Activated CD4-positive, alpha-beta T cell treated with anti-CD3 and anti-CD28 coated beads for 36 hours (primary cell): ENCODE measurements at regions of chr1 and their contacts with region 1.

Region 1: GRCh38 chr1:244835276-244836134 is at the start of gene COX20:
- DNase-seq: peak; percentile 92
- ATAC-seq: peak; percentile 60
- H3K4me3 Mint-ChIP-seq: peak within 1 kb of the TSS; percentile 80
- H3K27ac Mint-ChIP-seq: peak within 1 kb of the TSS; percentile 99
- H3K4me1 Mint-ChIP-seq: peaks cover 43% of the 10 kb centered on the region
- H3K27me3 Mint-ChIP-seq: no peaks in the 10 kb centered on the region
- total RNA-seq, gene COX20: 32.0 to 33.2 TPM

Region 2: GRCh38 chr1:244047621-244048471 is 787.7 kb before region 1 on chr1:
- CTCF ChIA-PET with region 1: no interaction called
- POLR2A ChIA-PET with region 1: no interaction called
- intact Hi-C with region 1: loop called in 1 of 2 experiments (anchors 10 kb)
- DNase-seq: peak; percentile 98
- ATAC-seq: peak; percentile 92
- H3K4me3 Mint-ChIP-seq: peak overlapping the region; percentile 93
- H3K27ac Mint-ChIP-seq: peak overlapping the region; percentile 97
- H3K4me1 Mint-ChIP-seq: peaks cover 35% of the 10 kb centered on the region
- H3K27me3 Mint-ChIP-seq: no peaks in the 10 kb centered on the region

Region 3: DNA sequence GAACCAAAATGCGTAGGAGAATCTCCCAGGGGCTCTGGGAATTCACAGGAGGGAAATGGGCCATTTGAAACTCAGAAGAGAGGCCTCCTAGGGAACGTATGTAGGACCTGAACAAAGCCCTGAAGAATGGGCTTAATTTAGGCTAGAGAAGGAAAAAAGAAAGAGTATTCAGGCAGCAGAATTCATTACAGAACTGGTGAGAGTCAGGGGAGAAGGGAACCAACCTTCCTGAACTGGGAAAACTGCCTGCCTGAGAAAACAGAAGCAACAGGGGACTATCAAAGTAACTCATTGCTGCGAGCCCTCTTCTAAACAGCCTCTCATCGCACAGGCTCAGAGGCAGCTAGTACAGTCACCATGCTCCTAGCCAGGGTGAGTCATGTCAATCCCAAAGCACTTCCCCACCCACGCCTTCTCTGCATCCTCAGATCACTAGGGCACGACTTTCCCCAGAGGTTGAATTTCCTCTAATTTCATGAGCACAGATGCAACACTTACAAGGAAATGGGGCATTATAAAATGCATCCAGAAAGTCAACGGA is 481.9 kb before region 1 on chr1:
- CTCF ChIA-PET with region 1: no interaction called
- POLR2A ChIA-PET with region 1: no interaction called
- intact Hi-C with region 1: no loop called
- DNase-seq: peak; percentile 55
- ATAC-seq: peak; percentile 63
- H3K4me3 Mint-ChIP-seq: no peak overlapping the region
- H3K27ac Mint-ChIP-seq: peak overlapping the region; percentile 37
- H3K4me1 Mint-ChIP-seq: peaks cover 28% of the 10 kb centered on the region
- H3K27me3 Mint-ChIP-seq: no peaks in the 10 kb centered on the region

Region 4: DNA sequence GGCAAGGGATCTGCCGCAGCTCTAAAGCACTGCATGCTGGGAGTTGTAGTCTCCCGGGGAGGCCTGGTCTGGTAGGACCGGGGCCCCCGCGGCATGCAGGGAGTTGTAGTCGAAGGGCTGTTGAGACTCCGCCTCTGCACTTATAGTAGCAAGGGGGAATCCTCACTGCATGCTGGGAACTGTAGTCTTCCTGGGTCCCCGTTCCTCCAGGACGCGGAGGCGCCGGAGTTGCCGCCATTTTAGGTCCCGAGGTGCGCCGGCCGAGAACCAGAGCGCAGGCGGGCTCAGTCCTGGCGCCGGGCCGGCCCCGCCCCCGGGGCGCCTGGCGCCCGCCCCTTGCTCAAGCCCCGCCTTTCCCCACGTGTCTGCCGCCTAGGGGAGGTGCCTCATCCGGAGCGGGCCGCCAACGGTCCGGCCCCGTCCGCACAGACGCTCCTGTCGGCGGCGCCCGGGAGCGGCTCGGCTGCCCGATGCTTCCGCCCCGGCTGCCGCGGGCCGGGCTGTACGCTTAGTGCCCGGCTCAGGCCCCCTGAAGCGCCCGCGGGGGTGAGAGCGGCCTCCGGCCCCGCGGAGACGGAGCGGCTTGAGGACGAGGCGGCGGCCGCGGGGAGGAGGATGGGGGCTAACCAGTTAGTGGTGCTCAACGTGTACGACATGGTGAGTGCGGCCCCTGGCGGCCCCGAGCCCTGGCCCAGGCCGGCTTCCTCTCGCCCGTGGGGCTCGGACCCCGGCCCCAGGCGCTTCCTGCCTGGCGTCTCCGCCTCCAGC is 182.6 kb before region 1 on chr1 and contains the start of gene DESI2:
- CTCF ChIA-PET with region 1: no interaction called
- POLR2A ChIA-PET with region 1: interaction called, 3 read pairs
- intact Hi-C with region 1: loop called (anchors 1 kb)
- DNase-seq: peak; percentile 98
- ATAC-seq: peak; percentile 96
- H3K4me3 Mint-ChIP-seq: peak within 1 kb of the TSS; percentile 76
- H3K27ac Mint-ChIP-seq: peak within 1 kb of the TSS; percentile 95
- H3K4me1 Mint-ChIP-seq: peaks cover 19% of the 10 kb centered on the region
- H3K27me3 Mint-ChIP-seq: no peaks in the 10 kb centered on the region
- total RNA-seq, gene DESI2: 24.5 to 26.0 TPM

Region 5: DNA sequence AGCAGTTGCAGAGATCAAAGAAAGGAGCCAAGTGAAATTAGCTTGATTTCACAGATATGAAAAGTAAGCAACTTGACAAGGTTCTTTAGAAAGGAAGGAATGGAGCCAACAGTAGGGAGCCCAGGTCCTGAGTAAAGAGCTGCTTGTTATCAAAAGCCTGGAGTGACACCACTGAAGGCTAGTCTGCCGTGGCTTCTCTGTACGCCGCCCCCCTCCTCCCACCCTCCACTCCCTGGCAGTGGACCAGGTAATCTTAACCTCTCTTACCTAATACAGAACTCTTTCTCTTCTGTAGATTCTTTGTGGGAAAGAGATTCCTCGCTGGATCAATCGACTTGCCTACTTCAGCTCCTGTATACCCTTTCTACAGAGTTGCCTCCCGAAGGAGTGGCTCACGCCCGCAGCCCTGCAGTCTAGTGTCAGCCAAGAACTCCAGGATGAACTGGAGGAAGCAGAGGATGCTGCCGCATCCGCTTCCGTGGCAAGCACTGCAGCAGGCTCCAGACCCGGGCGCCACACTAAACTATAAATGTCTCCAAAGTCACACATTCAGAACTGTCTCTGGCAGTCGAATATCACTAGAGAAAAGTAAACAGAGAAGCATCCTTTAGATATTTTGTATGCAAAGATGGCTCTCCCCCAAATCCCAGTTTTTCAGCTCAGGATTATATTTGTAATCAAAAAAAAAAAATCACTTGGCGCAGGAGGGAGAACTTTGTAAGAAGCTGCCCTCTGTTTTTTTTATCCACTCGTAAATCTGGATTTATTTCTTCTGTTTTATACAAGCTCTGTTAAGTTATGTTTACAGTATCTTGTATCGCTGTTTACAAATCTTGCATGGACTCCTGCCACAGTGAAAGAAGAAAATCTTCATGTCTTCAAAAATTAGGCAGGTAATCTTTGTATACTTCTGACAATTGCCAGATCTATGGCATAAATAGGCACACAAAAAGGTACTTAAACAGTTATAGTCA is 130.0 kb before region 1 on chr1:
- CTCF ChIA-PET with region 1: no interaction called
- POLR2A ChIA-PET with region 1: no interaction called
- intact Hi-C with region 1: no loop called
- DNase-seq: no peak
- ATAC-seq: no peak
- H3K4me3 Mint-ChIP-seq: no peak overlapping the region
- H3K27ac Mint-ChIP-seq: no peak overlapping the region
- H3K4me1 Mint-ChIP-seq: no peaks in the 10 kb centered on the region
- H3K27me3 Mint-ChIP-seq: no peaks in the 10 kb centered on the region

Region 6: DNA sequence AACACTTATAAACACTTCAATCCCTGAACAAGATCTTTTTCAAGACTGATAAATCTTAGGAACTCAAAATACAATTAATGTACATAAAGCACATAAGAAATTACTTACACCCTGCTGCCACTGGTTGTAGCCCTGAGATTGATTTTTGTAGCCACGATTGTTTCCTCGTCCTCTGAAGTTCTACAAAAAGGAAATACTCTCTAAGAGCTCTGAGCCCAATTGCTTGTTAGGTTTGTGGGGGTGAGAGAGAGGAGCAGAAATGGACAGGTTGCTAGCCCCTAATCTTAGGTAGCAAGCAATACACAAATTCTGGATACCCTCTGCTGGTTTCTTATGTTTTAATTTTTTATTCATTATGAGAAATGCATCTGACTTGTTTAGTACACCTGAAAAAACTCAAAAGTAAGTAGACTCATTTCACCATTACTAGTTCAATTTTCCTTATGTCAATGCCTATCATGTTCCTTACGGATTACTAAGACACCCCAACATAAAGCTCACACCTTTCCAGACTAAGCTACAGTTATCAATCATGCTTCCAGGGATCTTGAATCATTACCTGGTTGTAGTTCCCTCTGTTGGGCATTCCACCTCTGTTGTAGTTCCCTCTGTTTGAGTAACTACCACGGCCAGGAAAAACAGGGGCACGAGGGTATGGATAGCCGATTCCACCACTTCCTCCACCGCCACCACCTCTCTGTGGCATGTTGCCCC is 19.5 kb after region 1 on chr1:
- CTCF ChIA-PET with region 1: interaction called, 20 read pairs
- POLR2A ChIA-PET with region 1: interaction called, 14 read pairs
- intact Hi-C with region 1: no loop called
- DNase-seq: no peak
- ATAC-seq: no peak
- H3K4me3 Mint-ChIP-seq: peak overlapping the region; percentile 22
- H3K27ac Mint-ChIP-seq: peak overlapping the region; percentile 88
- H3K4me1 Mint-ChIP-seq: peaks cover 86% of the 10 kb centered on the region
- H3K27me3 Mint-ChIP-seq: no peaks in the 10 kb centered on the region

Region 7: GRCh38 chr1:244970661-244971551 is 135.4 kb after region 1 on chr1:
- CTCF ChIA-PET with region 1: interaction called, 4 read pairs
- POLR2A ChIA-PET with region 1: interaction called, 4 read pairs
- intact Hi-C with region 1: loop called (anchors 1 kb)
- DNase-seq: peak; percentile 96
- ATAC-seq: peak; percentile 84
- H3K4me3 Mint-ChIP-seq: peak overlapping the region; percentile 92
- H3K27ac Mint-ChIP-seq: peak overlapping the region; percentile 97
- H3K4me1 Mint-ChIP-seq: peaks cover 15% of the 10 kb centered on the region
- H3K27me3 Mint-ChIP-seq: no peaks in the 10 kb centered on the region